Ascending aorta (tissue), 2 donors: ENCODE measurements at regions of chr7 and their contacts with region 1.

Region 1: GRCh38 chr7:70738151-70738885 is 393.6 kb upstream of the GALNT17 start:
- DNase-seq: no peak
- H3K4me3 ChIP-seq: no peak overlapping the region
- H3K27ac ChIP-seq: no peak overlapping the region
- H3K4me1 ChIP-seq: peaks cover 7 to 18% of the 10 kb centered on the region in 2 donors
- H3K27me3 ChIP-seq: no peaks in the 10 kb centered on the region
- CTCF ChIP-seq: peak in 1 of 3 experiments; percentile 8

Region 2: DNA sequence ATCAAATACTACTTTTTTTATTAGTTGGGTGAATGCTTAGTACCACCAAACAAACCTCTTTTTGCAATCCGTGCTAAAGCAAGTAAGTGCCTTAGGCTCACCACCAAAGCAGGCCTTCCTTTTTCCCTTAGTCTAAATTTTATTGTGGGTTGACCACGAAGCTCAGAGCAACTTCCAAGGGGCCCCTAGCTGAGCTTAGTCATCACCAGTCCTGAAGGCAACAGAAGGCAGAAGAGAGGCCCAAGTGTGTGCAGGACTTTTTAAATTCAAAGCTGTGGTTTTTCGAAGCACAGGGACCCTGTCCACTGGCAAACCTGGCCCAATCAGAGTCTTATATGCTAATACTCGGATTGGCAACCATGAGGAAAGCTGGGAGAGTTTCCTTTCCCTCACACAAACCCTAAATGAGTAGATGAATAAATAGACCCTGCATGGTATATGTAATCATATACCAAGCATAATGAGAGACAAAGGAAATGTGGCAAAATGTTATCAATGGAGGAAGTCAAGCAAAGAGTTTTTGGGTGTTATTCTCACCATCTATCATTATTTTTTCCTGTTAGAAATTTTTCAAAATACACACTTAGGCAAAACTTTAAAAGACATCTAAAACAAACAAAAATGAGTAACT is 59.6 kb before region 1 on chr7:
- intact Hi-C with region 1: loop called (anchors 10 kb)
- DNase-seq: no peak
- H3K4me3 ChIP-seq: no peak overlapping the region
- H3K27ac ChIP-seq: no peak overlapping the region
- H3K4me1 ChIP-seq: no peaks in the 10 kb centered on the region
- H3K27me3 ChIP-seq: no peaks in the 10 kb centered on the region
- CTCF ChIP-seq: no peak